ENCODE measurements at regions of chr17 and their contacts with region 1.

Region 1: DNA sequence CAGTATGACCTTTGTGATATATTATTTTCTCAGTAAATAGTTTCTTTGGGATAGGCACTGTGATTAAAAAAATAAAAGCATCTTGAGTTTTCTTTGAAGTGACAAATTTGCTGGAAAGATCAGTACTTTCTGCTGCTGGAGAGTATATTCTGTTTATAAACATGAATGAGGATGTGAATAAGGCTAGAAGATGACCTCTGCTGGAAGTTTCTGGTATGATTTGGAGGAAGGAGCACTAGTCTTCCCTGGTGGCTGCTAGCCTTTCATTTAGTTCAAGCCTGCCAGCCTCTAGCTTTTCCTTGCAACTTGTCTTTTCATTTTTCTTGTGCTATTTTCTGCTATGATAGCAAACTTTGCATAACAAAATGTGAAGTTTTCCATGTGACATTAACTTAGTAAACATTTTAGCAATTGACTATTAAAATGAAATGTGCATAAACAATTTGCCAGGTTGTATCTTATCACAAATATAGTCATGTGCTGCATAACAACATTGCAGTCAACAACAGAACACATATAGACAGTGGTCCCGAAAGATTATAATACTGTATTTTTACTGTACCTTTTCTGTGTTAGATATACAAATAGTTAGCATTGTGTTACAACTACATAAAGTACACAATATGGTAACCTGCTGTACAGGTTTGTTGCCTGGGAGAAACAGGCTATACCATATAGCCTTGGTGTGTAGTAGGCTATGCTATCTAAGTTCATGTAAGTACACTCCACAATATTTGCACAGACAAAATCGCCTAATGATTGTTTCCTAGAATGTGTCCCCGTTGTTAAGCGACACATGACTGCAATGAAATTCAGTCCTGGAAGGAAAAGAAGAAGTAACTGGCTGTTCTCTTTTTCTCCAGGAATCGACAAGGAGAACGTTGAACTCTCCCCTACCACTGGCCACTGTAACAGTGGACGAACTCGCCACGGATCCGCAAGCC is 18.1 kb upstream of the RAB11FIP4 start:
- DNase-seq: peak in 4 of 14 experiments; percentile 40 to 78 (median 76)
- ATAC-seq: peak; percentile 90
- H3K4me3 ChIP-seq: no peak overlapping the region
- H3K4me3 Mint-ChIP-seq: no peak overlapping the region
- H3K27ac ChIP-seq: no peak overlapping the region
- H3K27ac Mint-ChIP-seq: peak overlapping the region; percentile 3
- H3K4me1 ChIP-seq: no peaks in the 10 kb centered on the region
- H3K4me1 Mint-ChIP-seq: peaks cover 30% of the 10 kb centered on the region
- H3K27me3 ChIP-seq: no peaks in the 10 kb centered on the region
- H3K27me3 Mint-ChIP-seq: no peaks in the 10 kb centered on the region
- CTCF ChIP-seq: peak; percentile 83

Region 2: GRCh38 chr17:30970831-30971567 is 402.4 kb before region 1 on chr17 and contains the start of gene RNF135:
- CTCF ChIA-PET with region 1: no interaction called
- POLR2A ChIA-PET with region 1: no interaction called
- intact Hi-C with region 1: loop called in 1 of 2 experiments (anchors 1 kb)
- DNase-seq: peak; percentile 14 to 80 (median 46)
- ATAC-seq: peak; percentile 54
- H3K4me3 ChIP-seq: peak within 1 kb of the TSS; percentile 81
- H3K4me3 Mint-ChIP-seq: peak within 1 kb of the TSS; percentile 97
- H3K27ac ChIP-seq: peak within 1 kb of the TSS in 1 of 2 donors; percentile 7
- H3K27ac Mint-ChIP-seq: peak within 1 kb of the TSS; percentile 88
- H3K4me1 ChIP-seq: peaks cover 14% of the 10 kb centered on the region
- H3K4me1 Mint-ChIP-seq: peaks cover 26% of the 10 kb centered on the region
- H3K27me3 ChIP-seq: no peaks in the 10 kb centered on the region
- H3K27me3 Mint-ChIP-seq: no peaks in the 10 kb centered on the region
- CTCF ChIP-seq: no peak
- total RNA-seq, gene RNF135: 1.5 to 1.8 TPM

Region 3: GRCh38 chr17:31008374-31009041 is 364.9 kb before region 1 on chr17:
- CTCF ChIA-PET with region 1: no interaction called
- POLR2A ChIA-PET with region 1: no interaction called
- intact Hi-C with region 1: loop called in 1 of 2 experiments (anchors 1 kb)
- DNase-seq: peak; percentile 15 to 76 (median 49)
- ATAC-seq: peak; percentile 71
- H3K4me3 ChIP-seq: peak overlapping the region; percentile 74
- H3K4me3 Mint-ChIP-seq: peak overlapping the region; percentile 98
- H3K27ac ChIP-seq: peak overlapping the region in 1 of 2 donors; percentile 44
- H3K27ac Mint-ChIP-seq: peak overlapping the region; percentile 93
- H3K4me1 ChIP-seq: peaks cover 12% of the 10 kb centered on the region
- H3K4me1 Mint-ChIP-seq: peaks cover 17% of the 10 kb centered on the region
- H3K27me3 ChIP-seq: no peaks in the 10 kb centered on the region
- H3K27me3 Mint-ChIP-seq: no peaks in the 10 kb centered on the region
- CTCF ChIP-seq: no peak

Region 4: GRCh38 chr17:31015639-31016038 is 357.8 kb before region 1 on chr17:
- CTCF ChIA-PET with region 1: no interaction called
- POLR2A ChIA-PET with region 1: no interaction called
- intact Hi-C with region 1: loop called (anchors 1 to 2 kb)
- DNase-seq: no peak
- ATAC-seq: no peak
- H3K4me3 ChIP-seq: no peak overlapping the region
- H3K4me3 Mint-ChIP-seq: no peak overlapping the region
- H3K27ac ChIP-seq: no peak overlapping the region
- H3K27ac Mint-ChIP-seq: no peak overlapping the region
- H3K4me1 ChIP-seq: no peaks in the 10 kb centered on the region
- H3K4me1 Mint-ChIP-seq: no peaks in the 10 kb centered on the region
- H3K27me3 ChIP-seq: no peaks in the 10 kb centered on the region
- H3K27me3 Mint-ChIP-seq: no peaks in the 10 kb centered on the region
- CTCF ChIP-seq: no peak

Region 5: GRCh38 chr17:31216053-31216751 is 157.2 kb before region 1 on chr17:
- CTCF ChIA-PET with region 1: interaction called, 5 read pairs
- POLR2A ChIA-PET with region 1: no interaction called
- intact Hi-C with region 1: loop called (anchors 1 to 2 kb)
- DNase-seq: peak in 3 of 14 experiments; percentile 51 to 62 (median 57)
- ATAC-seq: no peak
- H3K4me3 ChIP-seq: no peak overlapping the region
- H3K4me3 Mint-ChIP-seq: no peak overlapping the region
- H3K27ac ChIP-seq: no peak overlapping the region
- H3K27ac Mint-ChIP-seq: no peak overlapping the region
- H3K4me1 ChIP-seq: no peaks in the 10 kb centered on the region
- H3K4me1 Mint-ChIP-seq: no peaks in the 10 kb centered on the region
- H3K27me3 ChIP-seq: no peaks in the 10 kb centered on the region
- H3K27me3 Mint-ChIP-seq: no peaks in the 10 kb centered on the region
- CTCF ChIP-seq: peak; percentile 81

Region 6: DNA sequence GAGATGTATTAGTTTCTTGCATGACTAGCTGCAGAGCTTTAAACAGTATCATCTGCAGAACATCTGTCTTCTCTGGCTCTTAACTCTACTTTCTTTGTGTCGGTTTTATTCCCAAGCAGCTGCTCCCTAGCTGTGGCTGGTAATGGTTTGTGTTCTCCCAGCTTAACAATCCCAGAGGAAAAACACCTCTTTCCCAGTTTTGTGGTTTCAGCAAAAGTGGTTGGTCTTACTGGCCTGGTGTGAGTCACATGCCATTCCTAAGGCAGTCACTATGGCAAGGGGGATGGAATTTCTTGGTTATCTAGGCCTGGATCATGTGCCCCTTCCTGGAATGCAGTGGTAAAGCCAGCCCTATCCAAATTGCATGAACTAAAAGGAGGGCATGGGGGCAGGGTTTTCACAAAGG is 103.8 kb before region 1 on chr17:
- CTCF ChIA-PET with region 1: interaction called, 5 read pairs
- POLR2A ChIA-PET with region 1: interaction called, 4 read pairs
- intact Hi-C with region 1: loop called (anchors 1 to 2 kb)
- DNase-seq: no peak
- ATAC-seq: no peak
- H3K4me3 ChIP-seq: no peak overlapping the region
- H3K4me3 Mint-ChIP-seq: no peak overlapping the region
- H3K27ac ChIP-seq: no peak overlapping the region
- H3K27ac Mint-ChIP-seq: no peak overlapping the region
- H3K4me1 ChIP-seq: no peaks in the 10 kb centered on the region
- H3K4me1 Mint-ChIP-seq: peaks cover 6% of the 10 kb centered on the region
- H3K27me3 ChIP-seq: no peaks in the 10 kb centered on the region
- H3K27me3 Mint-ChIP-seq: no peaks in the 10 kb centered on the region
- CTCF ChIP-seq: no peak

Region 7: DNA sequence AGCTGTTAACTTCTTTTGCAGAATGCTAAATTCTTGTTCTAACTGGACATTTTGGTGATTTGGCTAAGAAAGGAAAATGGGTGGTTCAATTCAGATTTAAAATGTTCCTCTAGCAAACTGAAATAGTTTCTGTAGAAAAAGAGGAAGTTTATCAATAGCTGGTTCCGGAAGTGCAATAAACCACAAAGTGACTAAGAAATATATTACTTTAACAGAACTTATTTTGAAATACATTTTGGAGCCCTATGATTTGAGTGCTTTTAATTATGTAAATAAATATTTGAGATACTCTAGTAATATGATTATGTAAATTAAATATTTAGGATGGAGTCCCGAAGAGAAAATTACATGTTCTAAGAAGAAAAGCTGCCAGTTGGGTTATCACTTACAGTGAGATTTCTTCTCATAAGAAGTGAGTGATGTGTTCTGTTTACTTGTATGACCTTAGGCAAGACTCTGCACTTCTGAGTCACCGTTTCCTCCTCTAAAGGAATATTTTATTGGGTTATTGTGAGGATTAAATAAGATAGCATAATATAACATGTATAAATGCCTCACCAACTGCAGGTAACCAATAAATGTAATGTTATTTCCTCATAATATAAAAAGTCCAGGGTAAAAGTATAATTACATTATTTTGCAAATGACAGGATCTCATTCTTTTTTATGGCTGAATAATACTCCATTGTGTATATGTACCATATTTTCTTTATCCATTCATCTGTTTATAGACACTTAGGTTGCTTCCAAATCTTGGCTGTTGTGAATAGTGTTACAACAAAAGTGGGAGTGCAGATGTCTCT is 59.2 kb before region 1 on chr17 and contains the start of gene EVI2B:
- CTCF ChIA-PET with region 1: interaction called, 4 read pairs
- POLR2A ChIA-PET with region 1: interaction called, 4 read pairs
- intact Hi-C with region 1: loop called (anchors 2 to 5 kb)
- DNase-seq: peak in 4 of 14 experiments; percentile 40 to 83 (median 74)
- ATAC-seq: peak; percentile 39
- H3K4me3 ChIP-seq: peak within 1 kb of the TSS; percentile 67
- H3K4me3 Mint-ChIP-seq: peak within 1 kb of the TSS; percentile 92
- H3K27ac ChIP-seq: peak within 1 kb of the TSS; percentile 47 to 77
- H3K27ac Mint-ChIP-seq: peak within 1 kb of the TSS; percentile 97
- H3K4me1 ChIP-seq: peaks cover 5% of the 10 kb centered on the region
- H3K4me1 Mint-ChIP-seq: peaks cover 60% of the 10 kb centered on the region
- H3K27me3 ChIP-seq: no peaks in the 10 kb centered on the region
- H3K27me3 Mint-ChIP-seq: no peaks in the 10 kb centered on the region
- CTCF ChIP-seq: no peak
- total RNA-seq, gene EVI2B: 99.1 to 102 TPM

Region 8: GRCh38 chr17:31398381-31399311 is 25.2 kb after region 1 on chr17:
- CTCF ChIA-PET with region 1: no interaction called
- POLR2A ChIA-PET with region 1: no interaction called
- intact Hi-C with region 1: no loop called
- DNase-seq: peak in 1 of 14 experiments; percentile 19
- ATAC-seq: no peak
- H3K4me3 ChIP-seq: no peak overlapping the region
- H3K4me3 Mint-ChIP-seq: no peak overlapping the region
- H3K27ac ChIP-seq: no peak overlapping the region
- H3K27ac Mint-ChIP-seq: no peak overlapping the region
- H3K4me1 ChIP-seq: no peaks in the 10 kb centered on the region
- H3K4me1 Mint-ChIP-seq: peaks cover 4% of the 10 kb centered on the region
- H3K27me3 ChIP-seq: peaks cover 2 to 11% of the 10 kb centered on the region in 2 experiments
- H3K27me3 Mint-ChIP-seq: peaks cover 35% of the 10 kb centered on the region
- CTCF ChIP-seq: no peak

Region 9: GRCh38 chr17:31425282-31426040 is 52.0 kb after region 1 on chr17:
- CTCF ChIA-PET with region 1: no interaction called
- POLR2A ChIA-PET with region 1: no interaction called
- intact Hi-C with region 1: no loop called
- DNase-seq: no peak
- ATAC-seq: no peak
- H3K4me3 ChIP-seq: no peak overlapping the region
- H3K4me3 Mint-ChIP-seq: no peak overlapping the region
- H3K27ac ChIP-seq: no peak overlapping the region
- H3K27ac Mint-ChIP-seq: no peak overlapping the region
- H3K4me1 ChIP-seq: no peaks in the 10 kb centered on the region
- H3K4me1 Mint-ChIP-seq: no peaks in the 10 kb centered on the region
- H3K27me3 ChIP-seq: peaks cover 0 to 3% of the 10 kb centered on the region in 2 experiments
- H3K27me3 Mint-ChIP-seq: peaks cover 4% of the 10 kb centered on the region
- CTCF ChIP-seq: no peak

Region 10: GRCh38 chr17:31452101-31452500 is 78.7 kb after region 1 on chr17:
- CTCF ChIA-PET with region 1: no interaction called
- POLR2A ChIA-PET with region 1: no interaction called
- intact Hi-C with region 1: no loop called
- DNase-seq: no peak
- ATAC-seq: no peak
- H3K4me3 ChIP-seq: no peak overlapping the region
- H3K4me3 Mint-ChIP-seq: no peak overlapping the region
- H3K27ac ChIP-seq: no peak overlapping the region
- H3K27ac Mint-ChIP-seq: no peak overlapping the region
- H3K4me1 ChIP-seq: no peaks in the 10 kb centered on the region
- H3K4me1 Mint-ChIP-seq: no peaks in the 10 kb centered on the region
- H3K27me3 ChIP-seq: no peaks in the 10 kb centered on the region
- H3K27me3 Mint-ChIP-seq: no peaks in the 10 kb centered on the region
- CTCF ChIP-seq: no peak

Region 11: DNA sequence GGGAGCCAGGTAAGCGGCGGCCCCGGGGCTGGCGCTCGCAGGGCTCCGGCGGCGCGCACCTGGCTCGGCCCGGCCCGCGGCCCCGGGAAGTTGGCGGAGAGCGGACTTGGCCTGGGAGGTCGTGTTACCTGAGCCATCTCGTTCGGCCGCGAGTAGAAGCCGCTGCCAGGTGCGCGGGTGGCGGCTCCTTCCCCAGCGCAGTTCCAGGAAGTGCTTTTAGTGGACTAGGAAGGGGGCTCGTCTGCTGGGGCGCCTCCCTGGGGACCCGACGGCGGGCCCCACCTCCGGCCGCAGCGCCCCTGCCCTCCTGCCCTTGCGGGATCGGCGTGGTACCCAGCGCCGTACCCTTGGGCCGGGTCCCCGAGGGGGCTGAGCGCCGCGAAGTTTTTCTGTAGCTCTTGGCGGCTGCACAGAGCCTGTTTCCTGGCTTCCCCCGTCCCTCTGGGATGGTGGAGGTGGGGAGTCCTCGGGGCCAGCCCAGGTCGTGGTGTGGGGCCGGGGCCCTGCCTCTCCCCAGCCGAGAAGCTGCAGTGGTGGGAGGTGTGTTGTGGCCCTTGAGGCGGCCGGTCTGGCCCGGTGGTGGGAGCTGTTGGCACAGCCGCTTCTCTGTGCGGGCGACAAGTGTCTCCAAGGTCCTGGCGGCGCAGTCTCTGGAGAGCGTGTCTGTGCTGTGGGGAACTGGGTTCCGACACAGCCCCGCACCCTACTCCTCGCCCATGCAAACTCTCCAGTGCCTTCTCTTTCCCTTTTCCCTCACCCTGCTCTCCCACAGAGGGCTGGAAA is 115.0 kb after region 1 on chr17:
- CTCF ChIA-PET with region 1: no interaction called
- POLR2A ChIA-PET with region 1: no interaction called
- intact Hi-C with region 1: no loop called
- DNase-seq: peak in 8 of 14 experiments; percentile 19 to 62 (median 47)
- ATAC-seq: peak; percentile 5
- H3K4me3 ChIP-seq: peak overlapping the region; percentile 92
- H3K4me3 Mint-ChIP-seq: peak overlapping the region; percentile 96
- H3K27ac ChIP-seq: peak overlapping the region; percentile 67 to 90
- H3K27ac Mint-ChIP-seq: peak overlapping the region; percentile 96
- H3K4me1 ChIP-seq: peaks cover 60% of the 10 kb centered on the region
- H3K4me1 Mint-ChIP-seq: peaks cover 60% of the 10 kb centered on the region
- H3K27me3 ChIP-seq: no peaks in the 10 kb centered on the region
- H3K27me3 Mint-ChIP-seq: no peaks in the 10 kb centered on the region
- CTCF ChIP-seq: no peak